ENCODE measurements at regions of chr10 and their contacts with region 1.

Region 1: DNA sequence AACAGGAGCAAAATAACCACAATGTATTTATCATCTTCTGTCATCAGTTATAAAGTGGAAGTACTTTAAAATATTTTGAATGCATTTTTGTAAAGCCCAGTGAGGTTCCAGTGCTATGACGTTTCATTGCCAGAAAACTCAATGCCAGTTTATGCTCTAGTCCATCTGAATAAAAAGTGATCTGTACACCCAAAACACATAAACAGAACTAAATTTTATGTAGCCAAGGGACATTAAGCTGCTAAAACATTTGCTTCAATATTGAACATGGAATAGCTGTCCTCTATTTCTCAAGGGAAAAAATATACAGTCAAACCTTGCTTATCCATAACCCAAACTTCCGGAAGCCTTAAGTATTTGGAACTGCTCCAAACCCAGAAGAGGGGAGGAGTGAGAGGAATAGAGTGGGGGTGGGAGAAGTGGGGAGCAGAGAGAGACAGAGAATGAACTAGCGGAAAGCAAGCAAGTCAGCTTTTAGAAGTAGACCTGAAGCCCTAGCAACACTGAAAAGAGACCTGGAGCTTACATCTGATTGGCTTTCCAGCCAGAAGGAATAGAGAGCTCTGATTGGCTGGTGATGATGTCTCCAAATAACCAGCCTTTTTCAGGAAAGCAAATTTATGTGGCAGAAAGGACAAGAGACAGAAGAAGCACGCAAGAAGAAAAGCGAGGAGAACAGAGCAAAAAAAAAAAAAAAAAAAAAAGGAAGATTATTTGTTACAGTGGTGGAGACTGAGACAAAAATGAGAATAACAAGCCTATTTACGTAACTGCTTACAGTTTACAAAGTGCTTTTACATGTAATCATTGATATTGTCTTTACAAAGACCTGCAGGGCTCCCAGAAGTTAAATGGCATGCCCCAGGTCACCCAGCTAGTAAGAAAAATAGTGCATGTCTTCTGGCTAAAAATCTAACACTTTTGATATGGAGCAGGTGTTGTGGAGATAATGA is 196.0 kb downstream of the RNLS start:
- DNase-seq: peak; percentile 54
- CTCF ChIP-seq: no peak

Region 2: DNA sequence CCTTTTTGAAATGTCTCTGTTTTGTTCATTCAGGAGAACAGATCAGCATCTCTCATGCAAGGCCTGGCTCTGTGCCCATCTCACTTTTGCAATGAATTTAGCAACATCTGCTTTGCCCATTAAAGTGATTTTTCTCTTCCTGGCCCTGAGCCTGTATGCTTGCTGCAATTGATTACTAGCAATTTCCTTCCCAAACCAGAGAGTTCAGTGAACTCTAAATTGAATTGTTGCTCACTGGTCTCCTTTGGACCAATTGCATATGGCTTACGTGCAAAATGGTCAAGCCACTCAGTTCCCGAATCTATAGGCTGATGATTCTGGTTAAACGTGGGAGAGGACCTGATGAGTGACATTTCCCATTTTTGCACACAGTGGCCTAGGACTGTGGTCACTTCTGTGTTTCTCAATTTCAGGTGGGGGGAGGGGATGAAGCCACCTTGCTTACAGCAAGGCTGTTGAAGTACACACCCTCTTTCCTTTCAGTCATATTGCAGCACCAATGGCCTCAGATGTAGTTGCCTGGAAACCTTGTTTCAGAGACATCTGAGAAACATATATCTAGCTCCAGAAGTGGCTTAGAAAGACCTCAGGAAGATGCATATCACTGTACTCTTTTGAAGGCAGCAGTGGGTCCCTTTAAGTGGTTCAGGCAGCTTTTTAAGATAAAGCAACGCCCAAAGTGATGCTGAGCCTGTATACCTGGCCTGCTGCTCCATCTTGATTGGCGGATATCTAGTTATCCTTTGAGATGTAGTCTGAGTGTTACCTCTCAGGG is 322.3 kb before region 1 on chr10:
- CTCF ChIA-PET with region 1: interaction called, 5 read pairs
- POLR2A ChIA-PET with region 1: interaction called, 11 read pairs
- DNase-seq: peak; percentile 38
- CTCF ChIP-seq: no peak

Region 3: DNA sequence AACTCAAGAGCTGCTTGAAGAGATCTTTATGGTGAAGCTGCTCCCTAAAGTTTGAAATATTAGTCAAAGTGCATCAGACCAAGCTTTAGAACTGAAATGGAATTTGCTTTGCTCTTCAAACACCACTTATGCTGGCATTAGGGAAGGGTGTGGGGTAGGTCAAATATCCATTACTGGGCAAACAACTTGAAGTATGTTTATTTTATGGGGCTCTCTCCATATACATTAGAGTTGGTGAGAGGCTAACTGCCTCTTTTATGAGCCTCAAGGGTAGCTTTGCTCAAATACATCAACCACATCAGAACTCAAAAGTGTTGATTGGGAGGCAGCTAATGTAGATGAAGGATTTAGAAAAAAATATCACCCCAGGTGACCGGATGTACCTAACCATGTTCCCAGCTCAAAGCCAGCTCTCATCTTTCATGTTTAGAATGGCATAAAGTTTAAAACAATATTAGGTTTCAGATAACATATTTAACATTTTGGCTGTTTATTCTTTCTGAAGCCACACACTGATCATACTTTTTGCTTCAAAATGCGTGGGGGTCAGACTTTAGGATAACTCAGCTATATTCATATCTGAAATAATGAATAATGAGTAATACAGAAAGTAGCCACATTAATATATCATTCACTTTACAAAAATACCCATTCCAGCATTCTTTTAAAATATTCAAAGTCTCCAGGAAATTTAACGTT is 205.0 kb before region 1 on chr10:
- CTCF ChIA-PET with region 1: interaction called, 11 read pairs
- POLR2A ChIA-PET with region 1: no interaction called
- DNase-seq: no peak
- CTCF ChIP-seq: no peak

Region 4: GRCh38 chr10:88409236-88409635 is 22.1 kb after region 1 on chr10:
- CTCF ChIA-PET with region 1: interaction called, 14 read pairs
- POLR2A ChIA-PET with region 1: no interaction called
- DNase-seq: no peak
- CTCF ChIP-seq: no peak

Region 5: DNA sequence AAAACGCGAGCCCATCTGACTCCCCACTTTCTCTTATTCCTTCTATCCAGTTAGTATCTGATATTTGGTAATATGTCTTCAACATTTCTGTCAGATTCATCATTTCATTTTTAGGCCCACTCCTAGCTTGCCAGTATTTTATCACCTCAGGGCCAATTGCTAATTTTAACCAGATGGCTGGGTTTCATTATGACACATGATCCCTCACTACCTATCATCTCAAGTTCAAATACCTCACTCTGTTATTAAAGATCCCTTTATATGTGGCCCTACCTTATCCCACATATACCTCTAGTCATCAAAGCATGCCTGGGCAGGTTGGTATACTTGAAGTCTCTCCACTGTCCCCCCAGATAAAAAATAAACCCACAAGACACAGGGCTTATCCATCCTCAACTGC is 91.2 kb after region 1 on chr10:
- CTCF ChIA-PET with region 1: no interaction called
- POLR2A ChIA-PET with region 1: no interaction called
- DNase-seq: no peak
- CTCF ChIP-seq: no peak

Region 6: GRCh38 chr10:88624840-88625239 is 237.7 kb after region 1 on chr10:
- CTCF ChIA-PET with region 1: no interaction called
- POLR2A ChIA-PET with region 1: no interaction called
- DNase-seq: no peak
- CTCF ChIP-seq: no peak

Measured in GM10248 (cell line).